HepG2 (cell line): ENCODE measurements at regions of chr2 and their contacts with region 1.

Region 1: DNA sequence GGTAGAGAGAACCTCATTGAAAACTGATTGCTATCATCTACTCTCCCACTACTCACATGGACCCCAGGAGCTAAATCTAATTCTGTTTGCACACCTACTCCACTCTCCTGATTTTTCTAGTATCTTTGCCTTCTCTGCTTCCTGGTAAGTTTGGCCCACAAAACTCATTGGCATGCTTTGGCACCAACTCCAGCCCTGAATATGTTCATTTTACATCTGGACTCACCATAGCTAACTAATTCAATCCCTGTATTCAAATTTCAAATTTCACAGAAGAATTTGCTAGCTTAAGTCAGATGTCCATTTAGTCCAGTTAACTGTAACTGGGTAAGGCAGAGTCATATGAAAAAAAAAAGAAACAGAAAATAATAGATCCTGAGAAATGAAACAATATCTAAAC is 442.1 kb downstream of the SUCLG1 start:
- DNase-seq: no peak
- ATAC-seq: no peak
- H3K4me3 ChIP-seq: no peak overlapping the region
- H3K27ac ChIP-seq: no peak overlapping the region
- H3K4me1 ChIP-seq: no peaks in the 10 kb centered on the region
- H3K27me3 ChIP-seq: no peaks in the 10 kb centered on the region
- CTCF ChIP-seq: no peak
- EP300 ChIP-seq: no peak
- POLR2A ChIP-seq: no peak
- RAD21 ChIP-seq: no peak

Region 2: DNA sequence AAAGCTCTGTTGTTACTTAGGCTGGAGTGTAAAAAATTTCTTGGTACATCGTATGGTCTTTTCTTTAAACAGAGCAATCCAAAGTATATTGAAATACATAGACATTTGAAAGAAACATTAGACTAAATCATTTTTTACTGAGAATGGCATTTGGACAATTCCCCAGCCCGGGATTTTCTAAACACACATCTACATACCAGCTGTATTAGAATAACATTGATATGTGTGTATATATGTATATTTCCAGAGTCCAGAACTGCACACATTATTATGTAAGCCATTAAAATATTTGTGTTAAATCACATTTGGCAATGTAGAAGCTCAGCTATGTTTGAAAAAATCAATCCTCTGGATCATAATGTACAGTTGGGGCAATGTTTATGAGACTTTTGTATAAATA is 1858.9 kb before region 1 on chr2:
- CTCF ChIA-PET with region 1: no interaction called
- POLR2A ChIA-PET with region 1: no interaction called
- in situ Hi-C with region 1: no loop called
- intact Hi-C with region 1: loop called (anchors 5 kb)
- DNase-seq: no peak
- ATAC-seq: no peak
- H3K4me3 ChIP-seq: no peak overlapping the region
- H3K27ac ChIP-seq: no peak overlapping the region
- H3K4me1 ChIP-seq: no peaks in the 10 kb centered on the region
- H3K27me3 ChIP-seq: no peaks in the 10 kb centered on the region
- CTCF ChIP-seq: no peak
- EP300 ChIP-seq: no peak
- POLR2A ChIP-seq: no peak
- RAD21 ChIP-seq: no peak

Region 3: DNA sequence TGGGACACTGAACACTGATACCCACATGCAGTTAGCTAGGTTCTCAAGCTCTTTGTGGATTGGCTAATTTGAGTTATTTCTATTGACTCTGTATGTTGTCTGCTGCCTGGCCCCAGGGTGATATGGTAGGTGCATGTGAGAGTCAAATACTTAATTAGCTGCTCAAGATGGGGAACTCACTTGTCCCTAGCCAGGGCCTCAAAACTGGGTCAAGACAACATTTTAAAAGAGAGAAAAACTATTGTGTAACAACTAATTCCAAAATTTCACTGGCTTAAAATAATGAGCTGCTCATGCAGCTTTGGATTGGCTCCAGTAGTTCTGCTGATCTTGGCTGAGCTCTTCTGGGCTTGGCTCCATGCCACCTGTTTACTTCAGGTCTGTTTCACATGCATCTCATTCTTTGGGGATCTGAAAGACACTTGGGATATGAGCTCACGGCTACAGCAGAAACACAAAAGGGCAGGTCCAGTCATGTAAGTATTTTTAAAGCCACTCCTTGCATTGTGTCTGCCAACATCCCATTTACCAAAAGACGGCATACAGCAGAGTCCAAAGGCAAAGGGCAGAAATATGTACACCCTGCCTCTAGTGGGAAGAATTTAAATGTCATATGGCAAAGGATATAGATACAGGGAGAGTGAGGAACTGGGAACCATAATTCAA is 274.8 kb before region 1 on chr2:
- CTCF ChIA-PET with region 1: no interaction called
- POLR2A ChIA-PET with region 1: no interaction called
- in situ Hi-C with region 1: no loop called
- intact Hi-C with region 1: no loop called
- DNase-seq: no peak
- ATAC-seq: no peak
- H3K4me3 ChIP-seq: no peak overlapping the region
- H3K27ac ChIP-seq: no peak overlapping the region
- H3K4me1 ChIP-seq: no peaks in the 10 kb centered on the region
- H3K27me3 ChIP-seq: no peaks in the 10 kb centered on the region; a peak in 1 of 5 replicates
- CTCF ChIP-seq: no peak
- EP300 ChIP-seq: no peak
- POLR2A ChIP-seq: no peak
- RAD21 ChIP-seq: no peak

Region 4: GRCh38 chr2:84388133-84388532 is 371.1 kb after region 1 on chr2:
- CTCF ChIA-PET with region 1: no interaction called
- POLR2A ChIA-PET with region 1: no interaction called
- in situ Hi-C with region 1: no loop called
- intact Hi-C with region 1: no loop called
- DNase-seq: no peak
- ATAC-seq: no peak
- H3K4me3 ChIP-seq: no peak overlapping the region
- H3K27ac ChIP-seq: no peak overlapping the region
- H3K4me1 ChIP-seq: no peaks in the 10 kb centered on the region
- H3K27me3 ChIP-seq: no peaks in the 10 kb centered on the region
- CTCF ChIP-seq: no peak
- EP300 ChIP-seq: no peak
- POLR2A ChIP-seq: no peak
- RAD21 ChIP-seq: no peak